HEK293 (cell line): ENCODE measurements at regions of chr11 and their contacts with region 1.

Region 1: GRCh38 chr11:4072668-4073285 is 21.8 kb upstream of the RRM1 start:
- H3K4me3 ChIP-seq: no peak overlapping the region
- H3K27ac ChIP-seq: no peak overlapping the region
- H3K4me1 ChIP-seq: peaks cover 4% of the 10 kb centered on the region; the same call in 1 of the 2 replicates
- CTCF ChIP-seq: peak; percentile 52; the same call in 1 of the 2 replicates

Region 2: GRCh38 chr11:3807909-3808860 is 264.6 kb before region 1 on chr11 and contains the start of gene PGAP2:
- CTCF ChIA-PET with region 1: interaction called, 10 read pairs
- POLR2A ChIA-PET with region 1: no interaction called
- H3K4me3 ChIP-seq: peak within 1 kb of the TSS; percentile 79
- H3K27ac ChIP-seq: peak within 1 kb of the TSS; percentile 25; the same call in 1 of the 2 replicates
- H3K4me1 ChIP-seq: no peaks in the 10 kb centered on the region
- CTCF ChIP-seq: peak; percentile 54

Region 3: DNA sequence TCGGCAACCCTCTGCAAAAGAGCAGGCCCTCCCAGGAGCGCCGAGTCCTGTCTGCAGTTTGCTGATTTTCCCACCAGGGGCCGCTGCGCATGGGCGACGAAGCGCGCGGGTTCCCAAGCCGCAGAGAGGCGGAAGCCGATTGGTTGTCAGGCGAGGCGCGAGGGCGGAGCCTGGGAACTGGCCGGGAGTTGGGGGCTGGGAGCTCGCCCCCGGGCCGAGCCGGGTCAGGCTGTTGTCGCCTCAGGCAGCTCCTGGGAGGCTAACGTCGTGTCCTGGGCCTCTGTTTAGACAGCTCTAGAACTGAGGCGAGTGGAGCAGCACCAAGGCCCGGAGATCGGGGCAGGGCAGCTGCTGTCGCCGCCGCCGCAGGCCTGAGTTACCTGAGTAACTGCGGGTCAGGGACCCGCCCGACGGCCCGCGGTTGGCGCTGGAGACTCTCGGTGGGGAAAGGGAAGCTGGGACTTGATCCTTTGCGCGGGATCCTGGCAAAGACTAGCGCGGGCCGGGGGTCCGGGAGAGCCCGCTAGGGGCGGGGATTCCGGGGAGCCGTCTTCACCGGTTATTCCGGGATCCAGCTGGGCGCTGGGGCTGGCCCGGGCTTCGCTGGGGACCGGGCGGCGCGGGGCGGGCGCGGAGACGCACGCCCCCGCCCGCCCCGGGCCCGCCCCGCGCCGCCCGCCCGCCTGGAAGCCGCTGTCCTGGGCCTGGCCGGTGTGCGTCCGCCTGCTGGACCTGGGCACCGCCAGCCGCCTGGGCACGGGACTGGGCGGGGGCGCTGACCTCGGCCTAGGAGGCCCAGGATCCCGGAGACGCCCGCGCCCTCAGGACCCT is 217.6 kb before region 1 on chr11 and contains the start of gene STIM1:
- CTCF ChIA-PET with region 1: interaction called, 589 read pairs
- POLR2A ChIA-PET with region 1: interaction called, 19 read pairs
- H3K4me3 ChIP-seq: peak within 1 kb of the TSS; percentile 87
- H3K27ac ChIP-seq: peak within 1 kb of the TSS; percentile 77
- H3K4me1 ChIP-seq: no peaks in the 10 kb centered on the region
- CTCF ChIP-seq: peak; percentile 89

Region 4: DNA sequence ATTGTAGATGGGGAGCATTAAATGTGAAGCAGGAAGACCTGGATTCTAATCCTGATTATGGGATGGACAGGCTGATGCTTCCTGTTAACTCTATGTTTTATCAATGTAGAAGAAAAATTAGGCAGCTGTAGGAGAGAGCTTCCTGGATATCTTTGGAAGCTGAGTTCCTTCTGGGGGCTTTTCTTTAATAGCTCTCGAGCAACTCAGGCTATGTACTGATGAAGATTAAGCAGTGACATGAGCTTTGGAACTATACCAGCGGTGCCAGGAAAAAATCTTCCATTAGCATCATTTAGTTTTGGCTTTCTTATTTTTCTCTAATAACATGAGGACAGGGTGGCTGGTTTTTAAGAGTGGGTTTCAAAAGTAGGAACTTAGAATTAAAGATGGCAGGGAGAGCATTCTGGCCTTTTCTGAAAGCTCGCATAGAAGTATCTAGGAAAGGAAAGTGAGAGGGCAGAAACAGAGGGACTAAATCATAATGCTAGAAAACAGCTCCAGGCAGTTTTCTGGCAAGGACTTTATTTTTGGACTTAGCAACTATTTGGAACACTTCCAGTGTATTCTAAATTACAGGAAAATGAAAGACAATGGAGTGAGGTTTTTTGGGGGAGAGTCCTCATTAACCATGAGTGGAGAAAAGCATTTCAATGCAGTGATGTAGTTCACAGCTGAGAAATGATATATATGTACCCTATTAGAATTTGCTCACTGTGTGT is 47.4 kb before region 1 on chr11:
- CTCF ChIA-PET with region 1: interaction called, 13 read pairs
- POLR2A ChIA-PET with region 1: no interaction called
- H3K4me3 ChIP-seq: no peak overlapping the region
- H3K27ac ChIP-seq: no peak overlapping the region
- H3K4me1 ChIP-seq: no peaks in the 10 kb centered on the region
- CTCF ChIP-seq: no peak

Region 5: DNA sequence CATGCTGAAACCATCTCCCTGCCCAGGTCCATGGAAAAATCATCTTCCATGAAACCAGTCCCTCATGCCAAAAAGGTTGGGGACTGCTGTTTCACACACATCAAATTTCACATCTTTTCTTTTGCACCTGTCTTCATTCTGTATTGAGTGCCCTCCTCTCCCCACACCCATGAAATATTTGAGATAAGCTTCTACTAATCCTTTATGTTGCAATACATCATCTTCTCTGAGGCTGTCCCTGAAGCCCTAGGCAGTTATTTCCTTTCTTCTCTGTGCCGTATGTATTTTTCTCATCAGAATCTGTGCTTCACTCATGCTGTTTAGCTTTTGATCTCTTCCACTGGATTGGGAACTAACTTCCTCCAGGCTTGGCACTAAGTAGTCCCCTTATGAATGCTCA is 18.1 kb before region 1 on chr11:
- CTCF ChIA-PET with region 1: interaction called, 33 read pairs
- POLR2A ChIA-PET with region 1: no interaction called
- H3K4me3 ChIP-seq: no peak overlapping the region
- H3K27ac ChIP-seq: no peak overlapping the region
- H3K4me1 ChIP-seq: no peaks in the 10 kb centered on the region
- CTCF ChIP-seq: no peak

Region 6: GRCh38 chr11:4125141-4125540 is 52.4 kb after region 1 on chr11:
- CTCF ChIA-PET with region 1: no interaction called
- POLR2A ChIA-PET with region 1: no interaction called
- H3K4me3 ChIP-seq: no peak overlapping the region
- H3K27ac ChIP-seq: no peak overlapping the region
- H3K4me1 ChIP-seq: no peaks in the 10 kb centered on the region
- CTCF ChIP-seq: no peak